ENCODE measurements at regions of chr15 and their contacts with region 1.

Region 1: GRCh38 chr15:63945007-63945788 is 101.1 kb downstream of the DAPK2 start:
- DNase-seq: peak; percentile 54
- H3K4me3 ChIP-seq: no peak overlapping the region
- H3K27ac ChIP-seq: no peak overlapping the region
- H3K4me1 ChIP-seq: peaks cover 7% of the 10 kb centered on the region
- H3K27me3 ChIP-seq: no peaks in the 10 kb centered on the region
- CTCF ChIP-seq: peak; percentile 92
- POLR2A ChIP-seq: no peak

Region 2: DNA sequence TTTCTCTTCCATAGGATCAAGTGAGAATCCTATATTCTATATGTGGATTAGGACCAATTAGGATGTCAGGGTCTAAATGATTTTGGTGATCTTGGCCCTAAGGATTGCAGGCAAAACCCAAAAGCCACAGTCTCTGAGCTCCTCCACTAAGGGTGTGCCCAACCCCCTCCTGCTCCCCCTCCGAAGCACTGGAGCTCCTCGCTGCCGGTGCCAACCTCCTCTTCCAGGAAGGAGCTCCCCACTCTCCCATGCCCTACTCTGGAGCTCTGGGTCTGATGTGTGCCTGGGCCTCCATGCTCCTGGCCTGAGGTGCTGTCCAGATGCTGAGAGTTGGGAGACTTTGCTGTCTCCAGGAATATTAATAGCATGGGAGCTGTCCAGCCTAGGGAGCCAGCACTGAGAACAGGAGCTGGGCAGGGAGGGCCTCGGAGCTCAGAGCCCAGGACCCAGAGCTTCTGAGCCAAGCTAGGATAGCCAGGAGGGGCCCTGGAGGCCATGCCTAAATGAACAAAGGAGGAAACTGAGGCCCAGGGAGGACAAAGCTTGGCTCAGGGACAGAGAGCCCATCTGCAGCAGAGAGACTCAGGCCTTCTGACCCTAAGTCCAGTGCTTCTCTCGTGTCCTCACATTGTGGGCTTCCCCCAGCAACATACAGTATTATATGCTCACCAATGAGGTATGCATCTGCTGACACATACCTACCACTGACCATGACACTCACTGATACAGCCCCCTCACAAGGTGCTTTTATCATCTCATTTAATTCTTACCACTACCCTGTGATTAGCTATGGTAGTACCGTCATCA is 74.6 kb before region 1 on chr15:
- CTCF ChIA-PET with region 1: no interaction called
- POLR2A ChIA-PET with region 1: no interaction called
- dilution Hi-C with region 1: no loop called
- intact Hi-C with region 1: no loop called
- DNase-seq: peak; percentile 78
- H3K4me3 ChIP-seq: no peak overlapping the region
- H3K27ac ChIP-seq: no peak overlapping the region
- H3K4me1 ChIP-seq: no peaks in the 10 kb centered on the region
- H3K27me3 ChIP-seq: peaks cover 0 to 3% of the 10 kb centered on the region in 2 experiments
- CTCF ChIP-seq: no peak
- POLR2A ChIP-seq: no peak

Region 3: GRCh38 chr15:63909819-63910437 is 35.3 kb before region 1 on chr15:
- CTCF ChIA-PET with region 1: interaction called, 12 read pairs
- POLR2A ChIA-PET with region 1: no interaction called
- dilution Hi-C with region 1: no loop called
- intact Hi-C with region 1: loop called (anchors 5 kb)
- DNase-seq: peak; percentile 89
- H3K4me3 ChIP-seq: no peak overlapping the region
- H3K27ac ChIP-seq: peak overlapping the region; percentile 39
- H3K4me1 ChIP-seq: peaks cover 32% of the 10 kb centered on the region
- H3K27me3 ChIP-seq: no peaks in the 10 kb centered on the region
- CTCF ChIP-seq: no peak
- POLR2A ChIP-seq: no peak

Region 4: GRCh38 chr15:63933522-63933921 is 11.7 kb before region 1 on chr15:
- CTCF ChIA-PET with region 1: interaction called, 23 read pairs
- POLR2A ChIA-PET with region 1: no interaction called
- dilution Hi-C with region 1: no loop called
- intact Hi-C with region 1: no loop called
- DNase-seq: no peak
- H3K4me3 ChIP-seq: no peak overlapping the region
- H3K27ac ChIP-seq: no peak overlapping the region
- H3K4me1 ChIP-seq: peaks cover 14% of the 10 kb centered on the region
- H3K27me3 ChIP-seq: no peaks in the 10 kb centered on the region
- CTCF ChIP-seq: no peak
- POLR2A ChIP-seq: no peak

Region 5: GRCh38 chr15:64180235-64180837 is 235.1 kb after region 1 on chr15:
- CTCF ChIA-PET with region 1: no interaction called
- POLR2A ChIA-PET with region 1: no interaction called
- dilution Hi-C with region 1: no loop called
- intact Hi-C with region 1: no loop called
- DNase-seq: peak; percentile 16
- H3K4me3 ChIP-seq: no peak overlapping the region
- H3K27ac ChIP-seq: no peak overlapping the region
- H3K4me1 ChIP-seq: no peaks in the 10 kb centered on the region
- H3K27me3 ChIP-seq: no peaks in the 10 kb centered on the region
- CTCF ChIP-seq: no peak
- POLR2A ChIP-seq: no peak